MCF 10A (cell line): ENCODE measurements at regions of chr15 and their contacts with region 1.

Region 1: GRCh38 chr15:90400406-90401314 is 12.6 kb downstream of the IQGAP1 start:
- DNase-seq: peak; percentile 93
- H3K4me3 Mint-ChIP-seq: peak overlapping the region; percentile 52
- H3K27ac Mint-ChIP-seq: peak overlapping the region; percentile 87
- H3K4me1 Mint-ChIP-seq: peaks cover 30% of the 10 kb centered on the region
- H3K27me3 Mint-ChIP-seq: no peaks in the 10 kb centered on the region
- CTCF ChIP-seq: no peak

Region 2: DNA sequence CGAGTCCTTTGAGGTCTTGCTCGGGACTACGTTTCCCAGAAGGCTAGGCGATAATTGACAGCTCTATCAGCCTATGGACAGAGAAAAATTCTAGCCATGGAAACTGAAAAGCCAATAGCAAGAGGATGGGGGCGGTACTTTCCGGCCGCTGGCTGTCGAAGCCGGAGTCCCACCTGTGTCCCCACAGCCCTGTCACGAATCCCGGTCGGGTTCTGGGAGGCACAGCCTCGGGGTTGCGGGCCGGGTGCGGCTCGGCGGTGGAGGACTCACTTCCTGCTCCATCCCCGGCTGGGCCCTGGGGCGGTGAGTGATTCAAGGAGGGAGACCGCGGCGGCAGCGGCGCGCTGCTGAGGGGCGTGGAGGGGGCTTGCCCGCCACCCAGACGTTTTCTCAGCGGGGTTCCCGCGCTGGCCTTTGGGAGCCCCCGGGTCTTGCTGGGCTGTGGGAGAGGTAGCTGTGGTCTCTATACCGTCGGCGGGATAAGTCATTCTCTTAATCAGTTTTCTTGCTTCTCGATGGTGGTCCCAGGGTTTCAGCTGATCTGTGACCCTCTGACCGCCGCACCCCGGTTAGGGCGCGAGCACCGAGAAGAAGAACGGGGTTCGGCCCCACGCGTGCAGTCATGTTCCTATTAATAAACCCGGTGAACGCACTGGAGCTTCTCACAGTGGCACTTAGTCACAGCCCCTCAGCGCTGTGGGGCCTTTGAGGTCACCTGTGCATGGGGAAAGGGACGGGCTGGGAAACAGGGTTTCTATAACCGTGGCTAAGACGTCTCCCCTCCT is 48.4 kb before region 1 on chr15 and contains the start of gene ZNF774:
- CTCF ChIA-PET with region 1: no interaction called
- POLR2A ChIA-PET with region 1: interaction called, 12 read pairs
- intact Hi-C with region 1: no loop called
- DNase-seq: peak; percentile 96
- H3K4me3 Mint-ChIP-seq: peak within 1 kb of the TSS; percentile 80
- H3K27ac Mint-ChIP-seq: peak within 1 kb of the TSS; percentile 81
- H3K4me1 Mint-ChIP-seq: peaks cover 9% of the 10 kb centered on the region
- H3K27me3 Mint-ChIP-seq: no peaks in the 10 kb centered on the region
- CTCF ChIP-seq: no peak
- total RNA-seq, gene ZNF774: 2.6 and 4.8 TPM in 2 replicates

Region 3: DNA sequence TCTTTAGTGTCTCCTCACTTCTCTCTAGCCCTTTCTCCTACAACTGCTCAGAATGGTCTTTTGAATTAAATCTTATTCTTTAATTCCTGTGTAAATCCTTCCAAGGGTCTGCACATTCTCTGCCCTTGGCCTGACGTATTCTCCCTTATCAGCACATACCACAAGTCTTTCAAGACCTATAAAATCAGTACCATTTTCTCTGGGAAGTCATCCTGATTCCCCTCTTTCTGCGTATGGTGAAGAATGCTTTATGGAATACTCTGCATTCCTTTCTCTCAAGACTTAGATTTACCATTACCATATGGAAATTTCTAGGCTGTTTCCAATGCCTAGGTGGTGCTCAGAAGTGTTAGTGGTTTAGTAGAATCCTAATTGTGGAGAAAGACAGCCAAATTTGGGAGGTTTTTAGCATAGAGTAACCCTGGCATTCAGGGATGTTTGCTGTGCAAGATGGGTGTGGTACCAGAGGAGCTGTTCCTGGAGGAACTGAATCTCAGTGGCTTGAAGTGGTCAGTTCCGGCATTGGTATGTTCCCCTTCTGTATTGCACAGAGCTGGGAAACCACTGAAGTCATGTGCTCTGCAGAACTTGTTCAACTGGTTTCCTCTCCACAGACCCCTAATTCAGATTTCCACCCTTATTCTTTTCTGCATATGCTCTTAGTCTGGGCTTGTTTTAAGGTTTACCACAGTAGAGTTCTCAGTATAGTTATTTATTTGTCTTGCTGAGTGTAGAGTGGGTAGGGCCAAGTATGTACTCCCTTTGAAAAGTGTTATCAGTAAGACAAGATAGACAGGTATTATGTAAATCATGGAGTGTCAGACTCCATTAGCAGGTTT is 11.9 kb after region 1 on chr15:
- CTCF ChIA-PET with region 1: interaction called, 5 read pairs
- POLR2A ChIA-PET with region 1: interaction called, 159 read pairs
- intact Hi-C with region 1: no loop called
- DNase-seq: peak; percentile 46
- H3K4me3 Mint-ChIP-seq: peak overlapping the region; percentile 8
- H3K27ac Mint-ChIP-seq: peak overlapping the region; percentile 65
- H3K4me1 Mint-ChIP-seq: peaks cover 57% of the 10 kb centered on the region
- H3K27me3 Mint-ChIP-seq: no peaks in the 10 kb centered on the region
- CTCF ChIP-seq: no peak

Region 4: DNA sequence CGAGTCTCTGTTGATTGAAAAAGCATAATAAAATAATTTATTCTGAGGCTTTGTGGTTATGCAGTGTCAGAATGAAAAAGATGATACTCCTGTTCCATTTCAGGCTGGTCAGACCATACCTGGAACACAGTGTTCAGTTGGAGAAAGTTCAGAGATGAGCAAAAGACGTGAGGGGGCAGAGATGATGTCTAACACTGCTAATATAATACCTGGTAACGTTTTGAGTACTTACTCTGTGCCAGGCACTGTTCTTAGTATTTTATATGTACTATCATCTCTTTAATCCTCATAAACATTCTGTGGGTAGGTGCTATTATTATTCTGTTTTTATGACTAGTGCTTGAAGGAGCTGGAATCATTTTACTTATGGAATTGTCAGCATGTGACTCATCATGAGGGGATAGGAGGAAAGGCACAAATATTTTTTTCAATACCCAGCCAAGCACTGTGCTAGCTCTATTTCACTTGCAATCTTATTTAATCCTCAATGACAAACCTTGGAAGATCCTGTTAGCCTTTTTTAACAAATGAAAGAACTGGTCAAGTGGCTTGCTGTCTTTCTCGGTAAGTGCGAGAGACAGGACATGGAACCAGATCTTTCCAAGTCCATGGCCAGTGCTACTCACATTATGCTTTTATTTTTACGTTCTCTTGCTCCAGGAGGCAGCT is 19.2 kb after region 1 on chr15:
- CTCF ChIA-PET with region 1: interaction called, 4 read pairs
- POLR2A ChIA-PET with region 1: interaction called, 159 read pairs
- intact Hi-C with region 1: loop called (anchors 2 kb)
- DNase-seq: peak; percentile 73
- H3K4me3 Mint-ChIP-seq: peak overlapping the region; percentile 64
- H3K27ac Mint-ChIP-seq: peak overlapping the region; percentile 96
- H3K4me1 Mint-ChIP-seq: peaks cover 26% of the 10 kb centered on the region
- H3K27me3 Mint-ChIP-seq: no peaks in the 10 kb centered on the region
- CTCF ChIP-seq: no peak

Region 5: DNA sequence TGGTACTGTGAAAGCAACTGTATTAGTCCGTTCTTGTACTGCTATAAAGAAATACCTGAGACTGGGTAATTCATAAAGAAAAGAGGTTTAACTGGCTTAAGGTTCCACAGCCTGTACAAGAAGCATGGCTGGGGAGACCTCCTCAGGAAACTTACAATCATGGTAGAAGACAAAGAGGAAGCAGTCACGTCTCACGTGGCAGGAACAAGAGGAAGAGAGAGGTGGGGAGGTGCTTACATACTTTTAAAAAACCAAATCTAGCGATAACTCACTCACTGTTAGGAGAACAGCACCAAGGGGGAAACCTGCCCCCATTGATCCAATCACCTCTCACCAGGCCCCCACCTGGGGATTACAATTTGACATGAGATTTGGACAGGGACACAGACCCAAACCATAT is 36.3 kb after region 1 on chr15:
- CTCF ChIA-PET with region 1: interaction called, 3 read pairs
- POLR2A ChIA-PET with region 1: interaction called, 26 read pairs
- intact Hi-C with region 1: no loop called
- DNase-seq: no peak
- H3K4me3 Mint-ChIP-seq: no peak overlapping the region
- H3K27ac Mint-ChIP-seq: no peak overlapping the region
- H3K4me1 Mint-ChIP-seq: peaks cover 20% of the 10 kb centered on the region
- H3K27me3 Mint-ChIP-seq: no peaks in the 10 kb centered on the region
- CTCF ChIP-seq: no peak

Region 6: GRCh38 chr15:90451053-90451850 is 50.6 kb after region 1 on chr15:
- CTCF ChIA-PET with region 1: interaction called, 3 read pairs
- POLR2A ChIA-PET with region 1: interaction called, 11 read pairs
- intact Hi-C with region 1: no loop called
- DNase-seq: peak; percentile 75
- H3K4me3 Mint-ChIP-seq: no peak overlapping the region
- H3K27ac Mint-ChIP-seq: peak overlapping the region; percentile 0
- H3K4me1 Mint-ChIP-seq: peaks cover 12% of the 10 kb centered on the region
- H3K27me3 Mint-ChIP-seq: no peaks in the 10 kb centered on the region
- CTCF ChIP-seq: no peak